ENCODE measurements at regions of chr1 and their contacts with region 1.

Region 1: DNA sequence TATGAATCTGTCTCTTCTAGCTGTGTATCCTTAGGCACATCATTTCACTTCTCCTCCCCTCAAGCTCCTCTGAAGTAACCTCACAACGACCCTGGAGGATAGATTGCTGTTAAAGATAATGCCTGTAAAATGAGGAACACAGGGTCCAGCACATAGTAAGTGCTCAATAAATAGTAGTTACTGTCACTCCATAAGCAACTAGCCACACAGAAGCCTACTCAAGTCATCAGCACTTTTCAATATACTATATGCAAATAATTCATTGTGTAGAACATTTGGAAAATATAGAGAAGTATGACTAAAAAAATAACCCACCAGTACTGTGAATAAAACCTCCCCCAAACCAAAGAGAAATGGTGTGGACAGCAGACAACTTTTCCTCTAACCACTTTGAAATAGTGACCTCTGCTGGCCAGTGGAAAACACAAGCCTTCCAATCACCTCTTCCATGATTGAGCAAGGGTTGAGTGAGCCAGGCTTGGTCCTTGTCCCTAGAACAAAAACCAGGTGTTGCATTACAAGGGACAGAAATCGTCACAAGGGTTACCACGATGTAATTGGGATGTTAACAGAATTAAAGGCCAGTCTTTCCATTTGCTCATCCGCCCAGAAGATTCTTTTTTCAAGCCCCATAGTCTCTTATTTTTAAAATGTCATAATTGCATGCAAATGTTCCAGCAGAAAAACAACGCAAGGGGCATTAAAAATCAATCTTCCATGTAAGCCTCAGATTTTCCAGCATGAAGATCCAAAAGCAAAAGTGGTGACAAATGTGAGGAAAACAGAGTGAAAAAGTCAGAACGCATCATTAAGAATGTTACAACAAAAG is 15.7 kb upstream of the GLIS1 start:
- DNase-seq: peak; percentile 37 to 70 (median 59)
- H3K4me3 ChIP-seq: no peak overlapping the region
- H3K27ac ChIP-seq: no peak overlapping the region
- H3K4me1 ChIP-seq: no peaks in the 10 kb centered on the region
- H3K27me3 ChIP-seq: no peaks in the 10 kb centered on the region
- CTCF ChIP-seq: peak; percentile 44 to 70 (median 63)
- POLR2A ChIP-seq: no peak

Region 2: GRCh38 chr1:53485478-53486394 is 269.0 kb before region 1 on chr1:
- intact Hi-C with region 1: loop called (anchors 2 to 5 kb)
- DNase-seq: peak; percentile 61 to 91 (median 81)
- H3K4me3 ChIP-seq: no peak overlapping the region
- H3K27ac ChIP-seq: no peak overlapping the region
- H3K4me1 ChIP-seq: no peaks in the 10 kb centered on the region
- H3K27me3 ChIP-seq: peaks cover 13% of the 10 kb centered on the region
- CTCF ChIP-seq: peak; percentile 77 to 87 (median 82)
- POLR2A ChIP-seq: no peak

Region 3: GRCh38 chr1:53929246-53929960 is 174.7 kb after region 1 on chr1:
- intact Hi-C with region 1: no loop called
- DNase-seq: no peak
- H3K4me3 ChIP-seq: no peak overlapping the region
- H3K27ac ChIP-seq: no peak overlapping the region
- H3K4me1 ChIP-seq: no peaks in the 10 kb centered on the region
- H3K27me3 ChIP-seq: no peaks in the 10 kb centered on the region
- CTCF ChIP-seq: no peak
- POLR2A ChIP-seq: no peak